ENCODE measurements at regions of chr2 and their contacts with region 1.

Region 1: DNA sequence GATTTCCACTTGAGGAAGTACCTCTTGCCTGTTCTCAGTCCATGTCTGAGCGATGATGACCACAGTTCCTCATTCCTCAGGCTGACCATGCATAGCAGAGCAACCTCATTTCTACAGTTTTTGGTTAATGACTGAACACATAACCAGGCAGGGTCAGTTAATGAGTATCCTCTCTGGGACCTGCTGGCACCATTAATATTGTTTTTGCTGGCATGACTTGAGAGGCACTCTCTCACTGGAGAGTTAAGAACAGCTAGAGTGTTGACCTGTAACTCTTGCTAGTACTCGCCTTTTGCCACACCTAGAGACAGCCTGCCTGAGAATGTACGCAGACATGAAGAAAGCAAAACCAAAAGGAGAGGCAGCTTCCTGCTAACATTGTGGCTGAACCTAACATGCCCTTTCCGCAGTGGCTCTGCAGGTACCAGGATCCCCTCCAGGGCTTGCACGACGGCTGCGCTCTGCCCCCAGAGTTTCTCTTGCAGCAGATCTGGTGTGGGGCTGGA is 23.9 kb downstream of the PECR start:
- DNase-seq: peak; percentile 62 to 73 (median 65)
- H3K4me3 ChIP-seq: peak overlapping the region in 1 of 2 donors; percentile 14
- H3K4me3 Mint-ChIP-seq: peak overlapping the region; percentile 75 to 93 (median 85)
- H3K27ac ChIP-seq: peak overlapping the region; percentile 61
- H3K27ac Mint-ChIP-seq: peak overlapping the region; percentile 98 to 99 (median 99)
- H3K4me1 ChIP-seq: peaks cover 23% of the 10 kb centered on the region
- H3K4me1 Mint-ChIP-seq: peaks cover 21 to 41% (median 27%) of the 10 kb centered on the region in 4 donors
- H3K27me3 ChIP-seq: no peaks in the 10 kb centered on the region
- H3K27me3 Mint-ChIP-seq: no peaks in the 10 kb centered on the region

Region 2: GRCh38 chr2:216044883-216045486 is 12.8 kb before region 1 on chr2:
- CTCF ChIA-PET with region 1: interaction called, 11 read pairs
- POLR2A ChIA-PET with region 1: interaction called, 3 read pairs
- intact Hi-C with region 1: no loop called
- DNase-seq: no peak
- H3K4me3 ChIP-seq: no peak overlapping the region
- H3K4me3 Mint-ChIP-seq: no peak overlapping the region
- H3K27ac ChIP-seq: no peak overlapping the region
- H3K27ac Mint-ChIP-seq: peak overlapping the region in 1 of 7 donors; percentile 12
- H3K4me1 ChIP-seq: no peaks in the 10 kb centered on the region
- H3K4me1 Mint-ChIP-seq: peaks cover 0 to 3% (median under 1%) of the 10 kb centered on the region in 4 donors
- H3K27me3 ChIP-seq: no peaks in the 10 kb centered on the region
- H3K27me3 Mint-ChIP-seq: no peaks in the 10 kb centered on the region

Region 3: GRCh38 chr2:216081487-216082116 is 23.9 kb after region 1 on chr2 and contains the starts of genes PECR and TMEM169:
- CTCF ChIA-PET with region 1: interaction called, 13 read pairs
- POLR2A ChIA-PET with region 1: interaction called, 38 read pairs
- intact Hi-C with region 1: loop called (anchors 1 kb)
- DNase-seq: peak; percentile 69 to 79 (median 74)
- H3K4me3 ChIP-seq: peak within 1 kb of the TSS; percentile 74 to 87
- H3K4me3 Mint-ChIP-seq: peak within 1 kb of the TSS; percentile 83 to 97 (median 94)
- H3K27ac ChIP-seq: peak within 1 kb of the TSS; percentile 65
- H3K27ac Mint-ChIP-seq: peak within 1 kb of the TSS; percentile 78 to 98 (median 92)
- H3K4me1 ChIP-seq: peaks cover 67% of the 10 kb centered on the region
- H3K4me1 Mint-ChIP-seq: peaks cover 41 to 69% (median 55%) of the 10 kb centered on the region in 4 donors
- H3K27me3 ChIP-seq: no peaks in the 10 kb centered on the region
- H3K27me3 Mint-ChIP-seq: no peaks in the 10 kb centered on the region
- total RNA-seq, gene PECR: 16.8 to 20.6 TPM
- total RNA-seq, gene TMEM169: 3.6 to 5.1 TPM